ENCODE measurements at regions of chr22 and their contacts with region 1.

Region 1: DNA sequence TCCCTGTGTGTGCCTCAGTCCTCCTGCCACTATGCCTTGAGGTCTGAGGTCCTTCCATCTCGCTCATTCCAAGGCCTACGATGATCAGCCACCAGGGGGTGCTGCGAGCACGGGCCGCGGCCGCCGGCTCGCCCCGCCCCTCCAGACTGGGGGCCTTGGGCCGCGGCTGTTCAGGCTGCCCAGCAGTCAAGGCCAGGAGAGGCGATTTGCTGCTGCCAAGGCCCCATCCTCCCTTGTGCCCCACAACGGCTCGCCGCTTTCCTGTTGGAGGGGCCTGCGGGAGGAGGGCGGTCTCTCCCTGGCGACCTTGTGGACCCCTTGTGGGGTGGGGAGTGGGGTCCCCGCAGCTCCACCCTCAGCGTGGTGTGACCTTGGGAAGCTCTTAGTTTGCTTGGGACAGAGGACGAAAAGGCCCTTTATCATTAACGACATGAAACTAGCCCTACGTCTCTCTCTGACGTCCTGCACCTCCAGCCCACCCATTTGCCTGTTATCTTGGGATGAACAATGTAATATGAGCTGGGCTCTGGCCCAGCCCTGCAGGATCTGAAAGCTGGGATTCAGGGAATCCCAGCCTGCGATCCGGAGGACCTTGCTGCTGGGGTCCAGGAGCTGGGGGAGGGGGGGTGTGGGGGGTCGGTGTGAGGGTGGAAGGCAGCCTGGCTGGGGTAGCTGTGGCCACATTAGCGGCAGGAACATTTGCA is 5.3 kb upstream of the GALR3 start:
- DNase-seq: peak; percentile 96

Region 2: DNA sequence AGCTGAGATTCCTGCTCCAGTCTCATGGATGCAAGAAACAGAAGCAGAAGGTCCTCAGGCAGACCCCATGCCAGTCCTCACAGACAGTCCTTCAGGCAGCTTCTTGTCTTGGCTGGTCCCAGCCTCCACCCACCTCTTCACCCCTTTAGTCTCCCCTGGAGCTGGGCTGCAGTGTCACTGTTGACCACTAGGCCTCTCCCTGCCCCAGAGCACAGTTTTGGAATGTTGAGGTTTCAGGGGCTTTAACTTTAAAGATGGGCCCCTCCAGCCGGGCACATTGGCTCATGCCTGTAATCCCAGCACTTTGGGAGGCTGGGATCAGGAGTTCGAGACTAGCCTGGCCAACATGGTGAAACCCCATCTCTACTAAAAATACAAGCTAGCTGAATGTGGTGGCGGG is 49.6 kb before region 1 on chr22:
- CTCF ChIA-PET with region 1: no interaction called
- POLR2A ChIA-PET with region 1: no interaction called
- DNase-seq: peak; percentile 58

Region 3: GRCh38 chr22:37807410-37808293 is 10.2 kb before region 1 on chr22 and contains the start of gene GCAT:
- CTCF ChIA-PET with region 1: interaction called, 23 read pairs
- POLR2A ChIA-PET with region 1: interaction called, 78 read pairs
- DNase-seq: peak; percentile 99

Region 4: GRCh38 chr22:37843741-37843990 is 25.8 kb after region 1 on chr22:
- CTCF ChIA-PET with region 1: interaction called, 8 read pairs
- POLR2A ChIA-PET with region 1: interaction called, 19 read pairs
- DNase-seq: peak; percentile 67

Region 5: DNA sequence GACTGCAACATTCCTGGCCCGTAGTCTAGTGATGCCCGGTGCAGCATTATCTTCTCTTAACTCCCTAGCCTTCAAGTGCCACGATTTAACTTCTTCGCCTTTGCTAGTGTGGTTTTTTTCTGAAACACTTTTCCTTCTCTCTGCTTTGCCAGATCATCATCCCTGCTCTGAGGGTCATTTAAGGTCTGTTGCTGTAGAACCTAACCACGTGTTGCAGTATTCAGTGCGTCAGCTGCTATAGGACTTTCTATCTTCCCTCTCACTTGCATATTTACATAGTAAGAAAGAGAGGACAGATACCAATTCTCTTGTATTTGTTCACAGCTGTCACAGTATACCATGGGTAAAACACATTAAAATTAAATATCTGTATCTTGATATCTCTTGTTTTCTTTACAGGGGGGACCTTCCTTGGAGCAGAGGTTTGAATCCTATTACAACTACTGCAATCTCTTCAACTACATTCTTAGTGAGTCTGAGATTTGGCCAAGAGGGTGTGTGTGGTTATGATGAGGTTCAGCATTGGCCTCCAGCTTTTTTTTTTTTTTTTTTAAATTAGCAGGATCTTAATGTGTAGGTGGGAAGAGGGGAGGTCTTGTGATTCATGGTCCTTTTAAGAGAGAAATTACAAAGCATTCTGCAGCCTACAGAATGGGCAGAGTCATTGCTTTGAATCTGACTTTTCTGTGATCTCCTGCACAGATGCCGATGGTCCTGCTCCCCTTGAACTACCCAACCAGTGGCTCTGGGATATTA is 44.9 kb after region 1 on chr22:
- CTCF ChIA-PET with region 1: interaction called, 69 read pairs
- POLR2A ChIA-PET with region 1: interaction called, 8 read pairs
- DNase-seq: no peak